ENCODE measurements at regions of chr17 and their contacts with region 1.

Region 1: GRCh38 chr17:17141860-17142552 is 64.1 kb downstream of the PLD6 start:
- DNase-seq: peak; percentile 36 to 81 (median 65)
- H3K4me3 ChIP-seq: no peak overlapping the region
- H3K27ac ChIP-seq: peak overlapping the region in 2 of 5 donors; percentile 22 to 50
- H3K4me1 ChIP-seq: peaks cover 12 to 36% of the 10 kb centered on the region in 2 donors
- H3K27me3 ChIP-seq: no peaks in the 10 kb centered on the region
- CTCF ChIP-seq: peak; percentile 77 to 91 (median 88)
- POLR2A ChIP-seq: no peak

Region 2: DNA sequence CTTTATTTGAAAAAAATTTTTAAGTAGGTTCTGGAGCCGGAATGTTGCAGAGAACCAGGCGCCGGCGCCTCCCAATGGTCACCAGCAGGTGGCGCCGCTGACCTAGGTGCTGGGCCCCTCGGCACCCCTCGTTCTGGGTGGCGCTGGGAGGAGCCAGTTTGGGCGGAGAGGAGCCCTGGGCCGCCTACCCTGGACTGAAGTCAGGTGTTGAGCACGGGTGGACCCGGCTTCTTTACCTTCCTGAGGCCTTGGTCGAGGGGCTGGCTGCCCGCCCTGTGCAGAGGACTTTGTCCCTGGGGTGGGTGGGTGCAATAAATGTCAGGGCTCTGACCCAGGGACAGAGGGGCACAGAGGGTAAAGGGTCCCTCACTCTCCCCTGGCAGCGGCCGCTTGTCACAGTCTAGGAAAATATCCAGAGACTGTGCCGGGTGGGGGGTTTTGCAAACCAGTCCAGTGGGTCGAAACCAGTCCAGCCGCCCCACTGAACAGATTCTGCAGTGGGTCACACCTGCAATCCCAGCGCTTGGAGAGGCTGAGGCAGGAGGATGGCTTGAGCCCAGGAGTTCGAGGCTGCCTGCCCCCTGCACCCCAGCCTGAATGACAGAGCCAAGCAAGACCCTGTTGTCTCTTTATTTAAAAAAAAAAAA is 140.0 kb before region 1 on chr17:
- intact Hi-C with region 1: loop called in 1 of 2 experiments (anchors 10 kb)
- DNase-seq: peak; percentile 65 to 83 (median 80)
- H3K4me3 ChIP-seq: no peak overlapping the region
- H3K27ac ChIP-seq: no peak overlapping the region
- H3K4me1 ChIP-seq: peaks cover 0 to 4% of the 10 kb centered on the region in 2 donors
- H3K27me3 ChIP-seq: no peaks in the 10 kb centered on the region
- CTCF ChIP-seq: peak; percentile 85 to 97 (median 92)
- POLR2A ChIP-seq: no peak

Region 3: DNA sequence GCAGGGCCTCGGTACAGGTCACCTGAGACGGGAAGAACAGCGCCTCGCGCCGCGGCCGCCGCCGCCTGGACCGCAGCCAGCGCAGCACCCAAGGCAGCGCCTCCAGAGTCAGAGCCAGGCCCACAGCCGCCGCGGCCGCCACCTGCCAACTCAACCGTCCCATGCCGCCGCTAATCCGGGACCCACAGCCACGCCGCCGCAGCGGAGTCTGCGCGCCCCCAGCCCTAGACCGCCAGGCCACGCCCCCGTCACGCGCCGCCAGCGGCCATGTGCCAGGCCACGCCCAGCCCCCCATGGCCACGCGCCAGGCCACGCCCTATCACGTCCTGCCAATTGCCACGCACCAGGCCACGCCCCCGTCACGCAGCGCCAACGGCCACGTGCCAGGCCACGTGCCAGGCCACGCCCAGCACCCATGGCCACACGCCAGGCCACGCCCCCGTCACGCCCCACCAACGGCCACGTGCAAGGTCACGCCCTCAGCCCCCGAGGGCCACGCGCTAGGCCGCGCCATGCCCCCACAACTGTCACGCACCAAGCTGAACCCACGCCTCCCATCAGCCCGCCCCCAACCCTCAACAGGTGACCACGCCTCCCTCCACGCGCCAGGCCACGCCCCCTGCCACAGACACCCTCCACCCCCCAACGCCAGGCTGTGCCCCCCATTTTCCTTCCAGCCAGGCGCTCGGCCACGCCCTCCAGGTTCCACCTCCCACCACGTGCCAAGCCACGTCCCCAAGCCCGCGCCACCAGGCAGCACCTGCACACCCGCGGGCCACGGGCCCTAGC is 64.3 kb after region 1 on chr17 and contains the start of gene PLD6:
- intact Hi-C with region 1: loop called in 1 of 2 experiments (anchors 10 kb)
- DNase-seq: peak; percentile 71 to 93 (median 89)
- H3K4me3 ChIP-seq: peak within 1 kb of the TSS in 2 of 4 donors; percentile 36 to 67
- H3K27ac ChIP-seq: peak within 1 kb of the TSS; percentile 48 to 90 (median 85)
- H3K4me1 ChIP-seq: peaks cover 29 to 39% of the 10 kb centered on the region in 2 donors
- H3K27me3 ChIP-seq: no peaks in the 10 kb centered on the region
- CTCF ChIP-seq: peak in 1 of 6 experiments; percentile 1
- POLR2A ChIP-seq: peak in 1 of 2 donors; percentile 50
- total RNA-seq, gene PLD6: 1.9 to 14.2 (median 3.3) TPM

Region 4: GRCh38 chr17:17303010-17303846 is 161.2 kb after region 1 on chr17 and contains the start of gene NT5M:
- intact Hi-C with region 1: loop called in 1 of 2 experiments (anchors 10 kb)
- DNase-seq: peak; percentile 51 to 79 (median 71)
- H3K4me3 ChIP-seq: peak within 1 kb of the TSS in 2 of 4 donors; percentile 45 to 75
- H3K27ac ChIP-seq: peak within 1 kb of the TSS in 3 of 5 donors; percentile 37 to 82 (median 50)
- H3K4me1 ChIP-seq: peaks cover 5 to 18% of the 10 kb centered on the region in 2 donors
- H3K27me3 ChIP-seq: no peaks in the 10 kb centered on the region
- CTCF ChIP-seq: no peak
- POLR2A ChIP-seq: peak in 1 of 2 donors; percentile 19
- total RNA-seq, gene NT5M: 1.0 to 4.8 (median 1.7) TPM